GM12878 (cell line): ENCODE measurements at regions of chr9 and their contacts with region 1.

Region 1: GRCh38 chr9:110777196-110777875 is 108.7 kb downstream of the MUSK start:
- DNase-seq: no peak
- ATAC-seq: no peak
- H3K4me3 ChIP-seq: no peak overlapping the region
- H3K27ac ChIP-seq: no peak overlapping the region
- H3K4me1 ChIP-seq: no peaks in the 10 kb centered on the region
- H3K27me3 ChIP-seq: no peaks in the 10 kb centered on the region
- CTCF ChIP-seq: no peak
- EP300 ChIP-seq: no peak
- POLR2A ChIP-seq: no peak
- RAD21 ChIP-seq: no peak

Region 2: GRCh38 chr9:110802416-110803035 is 25.2 kb after region 1 on chr9:
- CTCF ChIA-PET with region 1: interaction called, 3 read pairs
- POLR2A ChIA-PET with region 1: no interaction called
- RAD21 ChIA-PET with region 1: interaction called, 4 read pairs
- SMC1A ChIA-PET with region 1: interaction called, 21 read pairs
- in situ Hi-C with region 1: no loop called
- intact Hi-C with region 1: no loop called
- DNase-seq: no peak
- ATAC-seq: peak; percentile 77
- H3K4me3 ChIP-seq: no peak overlapping the region
- H3K27ac ChIP-seq: no peak overlapping the region
- H3K4me1 ChIP-seq: peaks cover 9% of the 10 kb centered on the region
- H3K27me3 ChIP-seq: no peaks in the 10 kb centered on the region
- CTCF ChIP-seq: no peak
- EP300 ChIP-seq: peak in 1 of 2 experiments; percentile 29; a peak in 1 of 4 replicates
- POLR2A ChIP-seq: no peak
- RAD21 ChIP-seq: no peak